ENCODE measurements at regions of chr1 and their contacts with region 1.

Region 1: DNA sequence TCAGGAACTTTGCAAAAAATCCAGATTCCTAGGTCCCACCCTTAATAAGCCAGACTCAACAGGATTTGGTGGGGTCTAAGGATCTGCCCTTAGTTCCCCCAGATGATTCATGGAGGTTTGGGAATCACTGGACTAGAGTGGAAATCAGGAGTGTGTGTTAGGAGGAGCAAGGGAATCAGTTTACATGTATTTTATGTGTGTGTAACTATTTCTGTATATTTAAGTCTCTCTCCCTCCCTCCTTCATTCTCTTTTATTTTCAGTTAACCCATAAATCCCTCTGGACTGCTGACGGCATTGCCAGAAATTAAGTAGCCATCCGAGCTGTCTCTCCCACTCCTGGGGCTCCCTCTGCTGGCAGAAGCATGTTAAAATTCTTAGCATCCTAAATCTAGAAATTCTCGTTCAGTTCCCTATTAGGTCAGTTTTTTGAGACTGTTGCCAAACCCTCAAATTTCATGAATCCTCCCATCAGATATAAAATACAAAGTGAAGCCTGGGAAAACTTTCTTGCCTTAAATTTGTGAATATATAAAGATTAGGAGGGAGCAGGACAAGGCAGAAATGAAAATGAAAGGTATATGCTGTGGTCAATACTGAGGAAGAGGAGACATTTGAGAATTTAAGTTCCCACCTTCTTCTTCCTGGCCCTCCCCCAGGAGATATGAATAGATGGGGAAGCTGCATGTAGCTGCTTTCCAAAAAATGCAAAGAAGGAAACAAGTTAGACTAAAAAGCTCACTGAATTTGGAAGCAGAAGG is 11.7 kb upstream of the HSD11B1 start:
- DNase-seq: peak; percentile 70
- H3K4me3 ChIP-seq: no peak overlapping the region
- H3K27ac ChIP-seq: no peak overlapping the region
- H3K27me3 ChIP-seq: no peaks in the 10 kb centered on the region
- CTCF ChIP-seq: peak; percentile 90

Region 2: DNA sequence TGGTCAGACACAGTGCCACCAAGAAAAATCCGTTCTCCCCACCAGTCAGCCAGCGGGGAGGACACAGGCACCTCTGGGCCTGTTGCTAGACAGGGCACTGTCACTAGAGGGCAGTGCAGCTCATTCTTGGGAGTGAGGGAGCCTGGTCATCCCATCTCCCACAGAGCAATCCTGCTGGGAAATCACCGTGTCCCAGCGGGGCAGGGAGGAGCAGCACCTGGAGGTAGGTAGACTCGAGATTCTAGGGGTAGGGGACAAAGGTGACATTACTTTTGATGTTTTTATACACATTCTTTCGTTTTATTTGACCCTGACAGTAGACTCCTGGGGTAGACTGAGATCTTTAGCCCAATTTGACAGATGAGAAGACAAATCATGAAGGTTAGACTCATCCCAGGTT is 116.1 kb before region 1 on chr1:
- CTCF ChIA-PET with region 1: interaction called, 159 read pairs
- POLR2A ChIA-PET with region 1: no interaction called
- DNase-seq: peak; percentile 39
- H3K4me3 ChIP-seq: no peak overlapping the region
- H3K27ac ChIP-seq: no peak overlapping the region
- H3K27me3 ChIP-seq: peaks cover 15% of the 10 kb centered on the region
- CTCF ChIP-seq: peak; percentile 97

Region 3: DNA sequence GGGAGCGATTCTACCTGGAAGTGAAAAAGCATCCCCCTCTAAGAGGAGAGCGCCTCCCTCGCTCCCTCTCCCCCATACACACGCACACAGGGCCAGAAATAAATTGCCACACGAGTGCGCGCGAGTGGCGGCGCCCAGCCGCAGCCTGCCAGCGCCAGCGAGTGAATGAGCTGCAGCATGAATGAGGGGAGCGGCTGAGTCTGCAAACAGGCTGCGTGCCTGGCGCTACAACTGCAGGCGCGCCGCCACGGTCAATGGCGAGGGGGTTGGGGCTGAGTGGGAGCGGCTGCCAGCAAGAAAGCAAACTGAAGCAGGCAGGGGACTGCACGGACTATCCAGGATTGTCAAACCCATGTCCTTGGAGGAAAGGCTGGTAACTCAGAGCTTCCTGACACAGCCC is 107.3 kb before region 1 on chr1:
- CTCF ChIA-PET with region 1: interaction called, 159 read pairs
- POLR2A ChIA-PET with region 1: no interaction called
- DNase-seq: no peak
- H3K4me3 ChIP-seq: peak overlapping the region; percentile 42
- H3K27ac ChIP-seq: no peak overlapping the region
- H3K27me3 ChIP-seq: peaks cover 2% of the 10 kb centered on the region
- CTCF ChIP-seq: no peak

Region 4: DNA sequence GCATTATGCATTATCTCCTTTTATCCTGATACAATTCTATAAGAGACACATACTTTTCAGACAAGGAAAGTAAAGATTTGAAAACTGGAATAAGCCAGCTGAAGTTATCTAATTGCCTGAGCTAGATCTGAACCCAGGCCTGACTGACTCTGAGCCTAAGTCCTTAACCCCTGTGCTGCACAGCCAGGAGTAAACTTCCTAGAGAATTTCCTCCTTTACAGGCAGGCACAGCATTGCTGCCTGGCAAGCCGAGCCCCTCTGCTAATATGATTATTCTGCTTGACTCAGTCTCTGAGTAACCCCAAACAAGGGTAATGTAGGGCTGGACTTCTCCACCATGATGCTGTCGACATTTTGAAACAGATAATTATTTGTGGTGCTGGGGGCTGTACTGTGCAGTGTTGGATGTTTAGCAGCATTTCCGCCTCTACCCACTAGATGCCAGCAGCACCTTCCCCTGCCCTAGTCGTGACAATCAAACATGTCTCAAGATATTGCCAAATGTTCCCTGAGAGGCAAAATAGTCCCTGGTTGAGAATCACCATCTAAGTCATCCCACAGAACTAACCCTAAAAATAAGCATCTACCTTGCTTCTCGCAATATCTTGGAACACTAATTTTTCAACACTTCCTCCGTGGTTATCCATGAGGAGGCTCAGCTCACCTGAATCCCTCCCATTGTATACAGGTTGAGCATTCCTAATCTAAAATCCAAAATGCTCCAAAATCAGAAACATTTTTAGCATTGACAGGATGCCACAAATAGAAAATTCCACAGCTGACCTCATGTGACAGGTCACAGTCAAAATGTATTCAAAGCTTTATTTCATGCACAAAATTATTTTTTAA is 90.9 kb before region 1 on chr1:
- CTCF ChIA-PET with region 1: interaction called, 20 read pairs
- POLR2A ChIA-PET with region 1: no interaction called
- DNase-seq: no peak
- H3K4me3 ChIP-seq: no peak overlapping the region
- H3K27ac ChIP-seq: no peak overlapping the region
- H3K27me3 ChIP-seq: peaks cover 2% of the 10 kb centered on the region
- CTCF ChIP-seq: peak; percentile 77

Measured in AG04450 (cell line).